HepG2 (cell line): ENCODE measurements at regions of chr22 and their contacts with region 1.

Region 1: DNA sequence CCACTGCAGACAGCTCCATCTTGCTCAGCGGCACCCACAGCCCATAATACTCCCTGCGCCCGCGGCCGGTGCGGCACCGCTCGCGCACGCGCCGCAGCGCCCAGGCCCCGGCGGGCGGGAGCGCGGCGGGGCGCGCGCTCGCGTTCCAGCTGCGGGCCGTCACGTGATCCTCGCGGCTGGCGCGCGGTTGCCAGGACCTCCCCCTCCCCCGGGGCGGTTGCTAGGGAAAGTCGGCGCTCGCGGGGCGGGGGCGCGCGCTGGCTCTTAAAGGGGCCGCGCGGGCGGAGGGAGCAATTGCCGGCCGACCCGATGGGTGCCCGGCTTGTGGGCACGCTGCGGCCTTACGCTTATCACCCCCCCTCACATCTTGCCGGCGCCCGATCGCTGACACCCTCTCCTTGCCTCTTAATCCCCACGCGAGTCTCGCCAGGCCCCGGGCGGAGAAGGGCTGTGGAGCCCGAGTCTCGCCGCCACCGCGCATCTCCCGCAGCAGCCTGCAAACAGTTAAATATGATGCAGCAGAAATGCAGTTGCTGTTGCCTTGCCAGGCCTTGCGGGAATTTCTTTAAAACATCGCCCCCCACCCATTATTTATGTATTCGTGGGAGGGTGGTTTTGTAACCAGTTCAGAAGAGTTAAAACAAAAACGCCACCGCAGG is at the start of gene CBX6:
- DNase-seq: peak; percentile 67
- ATAC-seq: peak; percentile 58
- H3K4me3 ChIP-seq: peak within 1 kb of the TSS; percentile 74 to 82 (median 80)
- H3K27ac ChIP-seq: no peak within 1 kb of the TSS
- H3K4me1 ChIP-seq: peaks cover 20% of the 10 kb centered on the region
- H3K27me3 ChIP-seq: peaks cover 2 to 35% of the 10 kb centered on the region in 2 experiments; a peak in 4 of 5 replicates
- CTCF ChIP-seq: 0 out of 2 replicates have a peak, but pooled peaks have one; percentile 4
- EP300 ChIP-seq: no peak
- POLR2A ChIP-seq: no peak; a peak in 1 of 4 replicates
- RAD21 ChIP-seq: 0 out of 2 replicates have a peak, but pooled peaks have one; percentile 24
- total RNA-seq, gene CBX6: 4.7 and 6.5 TPM in 2 replicates

Region 2: DNA sequence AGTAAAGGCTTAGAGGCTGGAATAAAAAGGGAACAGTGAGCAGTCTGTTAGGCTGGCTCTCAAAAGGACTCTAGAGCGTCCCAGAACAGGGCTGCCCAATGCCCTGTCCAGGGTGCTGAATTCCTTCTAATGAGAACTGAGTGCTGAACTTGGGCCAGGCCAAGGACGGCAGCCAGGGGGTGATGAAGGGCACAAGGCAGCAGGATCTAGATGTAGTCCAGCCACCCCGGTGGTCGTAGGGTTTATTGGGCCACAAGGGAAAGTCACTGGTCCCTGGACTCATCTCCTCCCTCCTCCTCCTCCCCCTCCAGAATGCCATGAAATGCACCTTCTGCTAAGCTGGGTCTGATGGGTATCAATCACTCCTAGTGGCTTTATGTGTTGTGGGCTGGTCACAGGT is 47.7 kb before region 1 on chr22:
- CTCF ChIA-PET with region 1: no interaction called
- POLR2A ChIA-PET with region 1: no interaction called
- in situ Hi-C with region 1: no loop called
- intact Hi-C with region 1: no loop called
- DNase-seq: peak; percentile 73
- ATAC-seq: peak; percentile 88
- H3K4me3 ChIP-seq: no peak overlapping the region
- H3K27ac ChIP-seq: no peak overlapping the region
- H3K4me1 ChIP-seq: no peaks in the 10 kb centered on the region
- H3K27me3 ChIP-seq: no peaks in the 10 kb centered on the region
- CTCF ChIP-seq: peak; percentile 61
- EP300 ChIP-seq: no peak
- POLR2A ChIP-seq: no peak
- RAD21 ChIP-seq: 0 out of 2 replicates have a peak, but pooled peaks have one; percentile 20

Region 3: DNA sequence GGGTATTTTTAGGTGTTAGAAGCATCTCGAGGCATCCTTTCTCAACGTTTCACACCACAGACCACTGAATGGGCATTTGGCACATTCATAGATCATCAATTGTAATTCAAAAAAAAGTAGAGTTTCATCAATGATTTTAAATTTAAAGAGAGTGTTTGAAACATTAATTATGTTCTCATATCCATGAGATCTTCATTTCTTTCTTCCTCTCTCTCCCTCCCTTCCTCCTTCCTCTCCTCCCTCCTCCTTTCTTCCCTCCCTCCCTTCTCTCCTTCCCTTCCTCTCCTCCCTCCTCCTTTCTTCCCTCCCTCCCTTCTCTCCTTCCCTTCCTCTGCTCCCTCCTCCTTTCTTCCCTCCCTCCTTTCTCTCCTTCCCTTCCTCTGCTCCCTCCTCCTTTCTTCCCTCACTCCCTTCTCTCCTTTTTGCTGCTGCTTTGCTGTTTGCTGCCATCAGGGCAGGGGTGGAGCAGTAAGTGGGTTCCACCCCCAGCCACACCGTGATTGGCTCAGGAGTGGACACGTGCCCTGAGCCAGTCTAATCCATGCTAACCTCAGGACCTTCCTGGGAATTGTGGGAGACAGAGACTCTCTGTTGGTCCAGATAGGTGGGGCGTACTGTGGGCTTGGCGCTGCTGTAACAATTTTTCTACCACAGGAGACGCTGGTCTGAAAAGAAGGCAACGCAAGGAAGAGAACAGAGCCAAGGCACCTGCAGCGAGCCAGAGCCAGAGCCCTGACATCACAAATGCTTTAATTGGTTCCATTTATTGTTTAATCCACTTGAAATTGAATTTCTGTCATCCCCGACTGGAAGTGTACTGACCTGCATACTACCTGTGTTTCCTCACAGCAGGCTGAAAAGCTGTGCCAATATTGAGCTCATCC is 51.4 kb after region 1 on chr22:
- CTCF ChIA-PET with region 1: no interaction called
- POLR2A ChIA-PET with region 1: interaction called, 5 read pairs
- in situ Hi-C with region 1: no loop called
- intact Hi-C with region 1: loop called (anchors 2 kb)
- DNase-seq: peak; percentile 88
- ATAC-seq: peak; percentile 95
- H3K4me3 ChIP-seq: peak overlapping the region; percentile 4 to 49 (median 22); a peak in 5 of 6 replicates
- H3K27ac ChIP-seq: peak overlapping the region; percentile 70
- H3K4me1 ChIP-seq: peaks cover 53% of the 10 kb centered on the region
- H3K27me3 ChIP-seq: no peaks in the 10 kb centered on the region
- CTCF ChIP-seq: peak; percentile 43
- EP300 ChIP-seq: no peak
- POLR2A ChIP-seq: peak; percentile 36 to 48; a peak in 1 of 4 replicates
- RAD21 ChIP-seq: no peak

Region 4: DNA sequence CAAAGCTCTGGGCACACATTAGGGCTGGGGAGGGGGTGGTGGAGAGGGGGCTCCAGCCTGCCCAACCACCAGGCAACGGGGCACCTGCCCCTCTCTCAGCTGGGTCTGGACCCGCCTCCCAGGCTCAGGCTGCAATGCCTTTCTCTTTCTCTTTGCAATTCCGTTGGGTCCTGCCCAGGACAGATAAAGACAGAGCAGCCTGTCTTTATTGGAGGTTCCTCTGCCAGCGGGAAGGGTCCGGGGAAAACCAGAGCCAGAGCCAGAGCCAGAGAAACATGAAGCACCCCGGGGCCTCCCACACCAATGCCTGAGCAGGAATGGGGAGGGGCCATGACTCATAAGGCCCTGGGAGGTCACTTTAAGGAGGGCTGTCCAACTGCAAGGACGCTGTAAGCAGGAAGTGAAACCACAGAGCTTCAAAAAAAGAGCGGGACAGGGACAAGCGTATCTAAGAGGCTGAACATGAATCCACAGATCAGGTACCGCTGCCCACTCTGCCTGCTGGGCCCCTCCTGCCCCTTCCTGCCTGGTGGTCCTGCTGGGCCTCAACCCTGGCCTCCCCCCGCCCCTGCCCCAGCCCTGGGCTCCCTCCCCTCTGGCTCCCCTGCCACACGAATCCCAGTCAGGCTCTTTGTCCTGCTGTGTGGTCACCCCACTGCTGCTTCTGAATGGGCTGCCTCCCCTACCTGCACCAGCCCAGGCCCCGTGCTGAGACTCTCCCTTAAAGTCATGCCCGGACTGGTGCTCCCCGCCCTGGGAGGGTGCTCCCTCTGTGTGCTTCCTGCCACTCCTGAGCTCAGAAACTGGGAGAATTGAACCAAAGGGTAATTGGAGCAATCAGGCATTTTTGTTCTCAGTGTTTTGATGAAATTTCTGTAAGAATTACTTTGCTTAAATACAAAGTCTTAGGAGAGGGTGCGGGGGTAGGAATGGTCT is 110.0 kb after region 1 on chr22 and contains the start of gene APOBEC3B:
- CTCF ChIA-PET with region 1: interaction called, 11 read pairs
- POLR2A ChIA-PET with region 1: no interaction called
- in situ Hi-C with region 1: no loop called
- intact Hi-C with region 1: no loop called
- DNase-seq: peak; percentile 86
- ATAC-seq: peak; percentile 94
- H3K4me3 ChIP-seq: peak within 1 kb of the TSS; percentile 46 to 70 (median 51)
- H3K27ac ChIP-seq: no peak within 1 kb of the TSS
- H3K4me1 ChIP-seq: peaks cover 27% of the 10 kb centered on the region
- H3K27me3 ChIP-seq: no peaks in the 10 kb centered on the region
- CTCF ChIP-seq: no peak
- EP300 ChIP-seq: no peak
- POLR2A ChIP-seq: 0 out of 4 replicates have a peak, but pooled peaks of 1 of the 2 experiments have one; percentile 28
- RAD21 ChIP-seq: no peak
- total RNA-seq, gene APOBEC3B: 8.8 and 13.9 TPM in 2 replicates

Region 5: DNA sequence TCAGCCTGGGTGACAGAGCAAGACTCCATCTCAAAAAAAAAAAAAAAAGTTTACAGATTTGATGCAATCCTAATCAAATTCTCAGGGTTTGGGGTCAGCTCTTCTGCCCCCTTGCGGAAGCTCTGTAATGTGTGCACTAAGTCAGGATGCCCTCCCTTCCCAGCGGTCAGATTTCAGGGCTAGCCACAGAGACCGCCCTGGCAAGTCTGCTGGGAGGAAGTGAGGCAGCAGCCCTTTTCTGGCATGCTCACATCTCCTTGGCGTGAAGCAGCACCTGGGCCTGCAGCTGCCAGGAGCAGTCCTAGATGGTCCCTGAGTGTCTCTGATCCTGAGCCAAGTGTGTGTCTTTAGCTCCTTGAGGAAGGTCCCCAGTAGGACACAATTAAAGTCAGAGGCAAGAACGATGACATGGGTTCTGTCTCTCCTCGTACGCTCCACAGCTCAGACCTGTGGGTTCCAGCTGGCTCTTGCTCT is 130.9 kb after region 1 on chr22:
- CTCF ChIA-PET with region 1: interaction called, 23 read pairs
- POLR2A ChIA-PET with region 1: no interaction called
- in situ Hi-C with region 1: loop called (anchors 5 kb)
- intact Hi-C with region 1: no loop called
- DNase-seq: peak; percentile 66
- ATAC-seq: peak; percentile 92
- H3K4me3 ChIP-seq: no peak overlapping the region; a peak in 1 of 6 replicates
- H3K27ac ChIP-seq: no peak overlapping the region
- H3K4me1 ChIP-seq: no peaks in the 10 kb centered on the region
- H3K27me3 ChIP-seq: peaks cover 0 to 9% of the 10 kb centered on the region in 2 experiments; a peak in 2 of 5 replicates
- CTCF ChIP-seq: peak; percentile 81
- EP300 ChIP-seq: no peak
- POLR2A ChIP-seq: no peak
- RAD21 ChIP-seq: peak; percentile 55; the same call in 1 of the 2 replicates

Region 6: DNA sequence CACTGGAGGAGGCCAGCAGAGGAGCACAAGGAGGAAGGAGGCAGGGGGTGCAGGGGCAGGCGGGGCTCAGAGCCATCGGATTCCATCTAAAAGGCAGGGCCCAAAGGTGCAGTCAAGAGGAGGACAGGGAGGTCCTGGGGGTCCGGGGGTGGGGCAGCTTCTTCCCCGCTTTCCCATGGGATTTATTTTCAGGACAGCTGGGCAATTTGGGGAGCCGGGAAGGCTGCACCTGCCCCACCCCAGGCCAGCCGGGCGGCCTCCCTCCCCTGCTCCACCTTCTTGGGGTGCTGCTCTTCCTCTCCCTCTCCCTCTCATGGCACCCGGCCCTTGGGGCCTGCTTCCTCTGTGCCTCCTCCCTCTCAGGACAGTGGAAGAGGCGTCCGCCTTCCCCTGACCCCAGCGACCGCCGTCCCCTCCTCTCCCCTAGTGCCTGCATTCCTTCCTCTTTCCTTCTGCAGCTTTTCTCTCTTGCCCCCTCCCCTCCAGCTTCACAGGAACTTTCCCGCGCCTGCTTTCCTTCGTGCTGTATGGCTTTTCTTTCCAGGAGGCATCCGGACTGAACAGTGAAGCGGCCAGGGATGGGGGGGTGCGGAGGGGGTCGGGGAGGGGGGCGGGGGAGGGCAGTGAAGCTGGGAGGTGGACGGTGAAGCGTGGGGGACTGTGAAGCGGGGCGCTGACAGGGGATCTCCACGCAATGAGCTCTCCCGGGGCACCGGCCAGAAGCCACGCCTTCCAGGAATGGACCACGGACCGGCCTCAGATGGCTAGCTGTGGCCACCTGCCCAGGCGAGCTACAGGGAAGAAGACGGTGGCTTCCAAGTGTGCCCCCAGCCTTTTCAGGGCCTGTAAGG is 251.7 kb after region 1 on chr22:
- CTCF ChIA-PET with region 1: interaction called, 5 read pairs
- POLR2A ChIA-PET with region 1: no interaction called
- in situ Hi-C with region 1: loop called (anchors 10 kb)
- intact Hi-C with region 1: no loop called
- DNase-seq: no peak
- ATAC-seq: peak; percentile 36; the same call in 1 of the 3 replicates
- H3K4me3 ChIP-seq: no peak overlapping the region
- H3K27ac ChIP-seq: no peak overlapping the region
- H3K4me1 ChIP-seq: peaks cover 7% of the 10 kb centered on the region
- H3K27me3 ChIP-seq: peaks cover 1 to 2% of the 10 kb centered on the region in 2 experiments; a peak in 1 of 5 replicates
- CTCF ChIP-seq: no peak
- EP300 ChIP-seq: no peak
- POLR2A ChIP-seq: no peak
- RAD21 ChIP-seq: no peak